Activated CD8-positive, alpha-beta T cell treated with anti-CD3 and anti-CD28 coated beads for 36 hours (primary cell): ENCODE measurements at regions of chr3 and their contacts with region 1.

Region 1: GRCh38 chr3:9890249-9891071 is at the start of gene JAGN1:
- DNase-seq: peak; percentile 94
- ATAC-seq: peak; percentile 86
- H3K4me3 Mint-ChIP-seq: peak within 1 kb of the TSS; percentile 99
- H3K27ac Mint-ChIP-seq: peak within 1 kb of the TSS; percentile 99
- H3K4me1 Mint-ChIP-seq: peaks cover 27% of the 10 kb centered on the region
- H3K27me3 Mint-ChIP-seq: no peaks in the 10 kb centered on the region
- CTCF ChIP-seq: no peak
- total RNA-seq, gene JAGN1: 29.7 to 30.3 TPM

Region 2: DNA sequence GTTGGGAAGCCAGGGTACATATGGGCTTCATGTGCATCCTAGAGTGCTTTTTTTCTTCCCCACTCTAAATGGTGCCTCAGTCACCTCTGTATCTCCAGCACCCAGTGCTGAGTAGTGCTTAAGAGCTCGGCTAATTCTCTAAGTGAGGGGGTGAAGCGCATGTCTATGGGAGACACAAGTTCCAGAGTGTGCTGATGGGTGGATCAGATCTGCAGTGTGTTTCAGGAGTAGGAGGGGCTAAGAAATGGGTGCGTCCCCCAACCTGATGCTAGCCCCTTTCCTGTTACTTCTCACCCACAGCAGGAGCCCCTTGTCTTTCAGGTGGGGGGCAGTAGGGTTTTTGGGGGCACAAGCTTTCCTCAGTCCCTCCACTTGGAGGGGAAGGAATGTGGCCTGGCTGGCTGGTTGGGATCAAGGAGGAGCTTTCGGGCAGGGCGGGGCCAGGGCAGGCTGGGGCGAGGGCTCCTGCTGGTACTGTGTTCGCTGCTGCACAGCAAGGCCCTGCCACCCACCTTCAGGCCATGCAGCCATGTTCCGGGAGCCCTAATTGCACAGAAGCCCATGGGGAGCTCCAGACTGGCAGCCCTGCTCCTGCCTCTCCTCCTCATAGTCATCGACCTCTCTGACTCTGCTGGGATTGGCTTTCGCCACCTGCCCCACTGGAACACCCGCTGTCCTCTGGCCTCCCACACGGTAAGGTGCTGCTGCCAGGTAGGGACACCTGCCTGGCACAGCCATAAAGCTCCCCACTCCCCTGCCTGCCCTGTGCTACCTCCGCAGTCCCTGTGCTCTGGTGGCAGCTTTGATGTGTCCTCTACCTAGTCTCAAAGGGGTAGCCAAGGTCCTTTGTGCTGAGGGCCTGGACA is 12.1 kb after region 1 on chr3 and contains the start of gene IL17RE:
- CTCF ChIA-PET with region 1: interaction called, 4 read pairs
- POLR2A ChIA-PET with region 1: interaction called, 14 read pairs
- intact Hi-C with region 1: no loop called
- DNase-seq: peak; percentile 43
- ATAC-seq: peak; percentile 82
- H3K4me3 Mint-ChIP-seq: peak within 1 kb of the TSS; percentile 46
- H3K27ac Mint-ChIP-seq: peak within 1 kb of the TSS; percentile 73
- H3K4me1 Mint-ChIP-seq: peaks cover 40% of the 10 kb centered on the region
- H3K27me3 Mint-ChIP-seq: no peaks in the 10 kb centered on the region
- CTCF ChIP-seq: no peak
- total RNA-seq, gene IL17RE: 1.2 to 1.7 TPM

Region 3: GRCh38 chr3:9957214-9957613 is 66.8 kb after region 1 on chr3:
- CTCF ChIA-PET with region 1: no interaction called
- POLR2A ChIA-PET with region 1: no interaction called
- intact Hi-C with region 1: no loop called
- DNase-seq: no peak
- ATAC-seq: no peak
- H3K4me3 Mint-ChIP-seq: no peak overlapping the region
- H3K27ac Mint-ChIP-seq: no peak overlapping the region
- H3K4me1 Mint-ChIP-seq: no peaks in the 10 kb centered on the region
- H3K27me3 Mint-ChIP-seq: no peaks in the 10 kb centered on the region
- CTCF ChIP-seq: no peak